Caco-2 (cell line): ENCODE measurements at regions of chr12 and their contacts with region 1.

Region 1: DNA sequence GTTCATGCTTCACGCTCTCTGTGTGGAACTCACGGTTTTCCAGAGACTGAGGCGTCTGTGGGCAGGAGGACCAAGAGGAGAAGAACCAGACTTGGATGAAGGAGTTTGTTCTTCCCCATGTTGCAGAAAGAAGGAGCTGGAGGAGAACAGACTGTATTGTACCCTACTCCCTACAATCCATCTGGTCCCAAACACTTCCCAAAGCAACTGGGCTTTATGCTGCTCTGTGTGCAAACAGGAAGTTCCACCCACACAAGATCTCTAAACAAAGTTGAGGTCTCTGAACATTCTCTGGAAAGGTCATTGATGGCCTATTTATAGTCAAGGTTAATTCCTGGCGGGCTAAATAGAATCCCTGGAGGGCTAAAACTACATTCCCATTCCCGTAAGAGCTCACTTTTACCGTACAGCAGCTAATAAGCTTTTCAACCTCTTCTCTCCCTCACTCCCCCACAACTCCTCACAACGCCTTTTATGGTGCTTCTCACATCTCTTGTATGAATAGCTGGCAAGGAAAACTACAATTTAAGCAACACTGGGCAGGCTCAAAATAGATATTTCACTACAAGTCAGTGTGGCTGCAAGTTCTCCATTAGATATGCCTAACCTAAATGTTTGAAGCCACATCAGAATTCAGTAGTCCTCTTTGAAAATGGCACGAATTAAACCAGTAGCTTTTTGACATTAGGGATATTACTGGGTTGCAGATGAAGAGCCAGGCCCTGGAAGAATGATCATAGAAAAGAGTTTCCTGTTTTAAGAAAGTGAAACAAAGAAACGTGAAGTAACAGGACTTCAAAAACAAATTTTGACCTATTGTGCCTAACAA is at the start of gene A2M:
- DNase-seq: no peak
- H3K4me3 ChIP-seq: no peak within 1 kb of the TSS
- H3K4me3 Mint-ChIP-seq: no peak within 1 kb of the TSS
- H3K27ac Mint-ChIP-seq: no peak within 1 kb of the TSS
- H3K4me1 ChIP-seq: peaks cover 7% of the 10 kb centered on the region
- H3K4me1 Mint-ChIP-seq: no peaks in the 10 kb centered on the region
- H3K27me3 ChIP-seq: no peaks in the 10 kb centered on the region
- H3K27me3 Mint-ChIP-seq: no peaks in the 10 kb centered on the region
- CTCF ChIP-seq: no peak
- total RNA-seq, gene A2M: 0.60 and 1.00 TPM in 2 replicates

Region 2: DNA sequence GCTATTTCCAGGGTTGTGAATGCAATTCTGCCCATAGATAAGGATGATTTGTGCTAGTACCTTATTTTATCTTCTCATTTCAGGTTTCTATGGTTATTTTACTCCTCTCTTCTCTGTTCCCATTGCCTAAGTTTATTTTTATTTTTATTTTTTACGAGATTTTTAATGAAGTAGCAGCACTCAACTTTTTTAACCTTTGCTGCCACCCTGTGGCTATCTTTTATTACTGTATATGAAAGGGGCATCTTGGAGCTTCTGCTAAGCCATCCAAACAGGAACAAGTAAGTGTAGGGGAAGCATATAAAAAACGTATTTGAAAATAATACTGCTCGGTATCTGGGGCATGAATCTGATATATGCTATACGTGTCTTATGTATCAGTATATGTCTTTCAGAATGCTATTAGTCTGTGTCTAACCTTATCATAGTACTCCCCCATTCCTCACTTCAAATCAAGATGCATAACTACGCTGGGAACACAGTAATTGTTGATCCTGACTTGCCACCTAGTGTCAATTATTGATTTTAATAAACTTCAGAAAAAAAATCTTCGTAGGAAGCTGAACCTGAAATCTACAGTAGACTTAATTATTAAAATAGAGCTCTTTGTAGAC is 66.3 kb before region 1 on chr12:
- CTCF ChIA-PET with region 1: no interaction called
- POLR2A ChIA-PET with region 1: no interaction called
- intact Hi-C with region 1: no loop called
- DNase-seq: peak in 1 of 2 experiments; percentile 56
- H3K4me3 ChIP-seq: no peak overlapping the region
- H3K4me3 Mint-ChIP-seq: no peak overlapping the region
- H3K27ac Mint-ChIP-seq: no peak overlapping the region
- H3K4me1 ChIP-seq: no peaks in the 10 kb centered on the region
- H3K4me1 Mint-ChIP-seq: no peaks in the 10 kb centered on the region
- H3K27me3 ChIP-seq: no peaks in the 10 kb centered on the region
- H3K27me3 Mint-ChIP-seq: peaks cover 33% of the 10 kb centered on the region
- CTCF ChIP-seq: peak; percentile 68 to 82

Region 3: GRCh38 chr12:9073076-9073475 is 42.9 kb before region 1 on chr12:
- CTCF ChIA-PET with region 1: no interaction called
- POLR2A ChIA-PET with region 1: interaction called, 3 read pairs
- intact Hi-C with region 1: loop called (anchors 5 kb)
- DNase-seq: no peak
- H3K4me3 ChIP-seq: no peak overlapping the region
- H3K4me3 Mint-ChIP-seq: no peak overlapping the region
- H3K27ac Mint-ChIP-seq: no peak overlapping the region
- H3K4me1 ChIP-seq: no peaks in the 10 kb centered on the region
- H3K4me1 Mint-ChIP-seq: no peaks in the 10 kb centered on the region
- H3K27me3 ChIP-seq: no peaks in the 10 kb centered on the region
- H3K27me3 Mint-ChIP-seq: no peaks in the 10 kb centered on the region
- CTCF ChIP-seq: no peak

Region 4: DNA sequence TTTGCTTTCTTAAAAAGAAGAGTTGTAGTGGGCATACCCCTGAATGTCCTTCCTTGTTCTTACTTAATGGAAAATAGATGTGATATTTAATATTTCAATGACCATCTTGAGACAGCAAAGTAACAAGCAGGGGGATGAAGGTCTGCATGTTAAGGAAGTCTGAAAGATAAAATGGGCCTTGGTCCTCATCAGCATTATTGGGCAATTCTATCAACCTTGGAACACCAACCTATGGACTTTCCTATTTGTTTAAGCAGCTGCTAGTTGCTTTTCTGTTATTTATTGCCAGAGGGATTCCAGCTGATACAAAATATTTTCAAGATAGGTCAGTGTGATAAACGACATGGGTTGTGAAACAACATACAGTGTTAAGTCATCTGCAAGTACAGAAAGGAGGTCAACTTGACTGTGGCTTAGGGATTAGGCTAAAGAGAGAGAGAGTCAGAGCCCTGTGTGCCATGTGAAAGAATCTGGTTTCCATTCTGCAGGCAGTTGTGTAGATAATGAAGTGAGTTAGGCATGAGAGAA is 16.1 kb after region 1 on chr12:
- CTCF ChIA-PET with region 1: no interaction called
- POLR2A ChIA-PET with region 1: interaction called, 5 read pairs
- intact Hi-C with region 1: loop called (anchors 2 kb)
- DNase-seq: peak; percentile 73 to 84
- H3K4me3 ChIP-seq: no peak overlapping the region
- H3K4me3 Mint-ChIP-seq: peak overlapping the region; percentile 51
- H3K27ac Mint-ChIP-seq: peak overlapping the region; percentile 81
- H3K4me1 ChIP-seq: peaks cover 39% of the 10 kb centered on the region
- H3K4me1 Mint-ChIP-seq: peaks cover 23% of the 10 kb centered on the region
- H3K27me3 ChIP-seq: no peaks in the 10 kb centered on the region
- H3K27me3 Mint-ChIP-seq: no peaks in the 10 kb centered on the region
- CTCF ChIP-seq: no peak